SK-N-SH (cell line): ENCODE measurements at regions of chr5 and their contacts with region 1.

Region 1: DNA sequence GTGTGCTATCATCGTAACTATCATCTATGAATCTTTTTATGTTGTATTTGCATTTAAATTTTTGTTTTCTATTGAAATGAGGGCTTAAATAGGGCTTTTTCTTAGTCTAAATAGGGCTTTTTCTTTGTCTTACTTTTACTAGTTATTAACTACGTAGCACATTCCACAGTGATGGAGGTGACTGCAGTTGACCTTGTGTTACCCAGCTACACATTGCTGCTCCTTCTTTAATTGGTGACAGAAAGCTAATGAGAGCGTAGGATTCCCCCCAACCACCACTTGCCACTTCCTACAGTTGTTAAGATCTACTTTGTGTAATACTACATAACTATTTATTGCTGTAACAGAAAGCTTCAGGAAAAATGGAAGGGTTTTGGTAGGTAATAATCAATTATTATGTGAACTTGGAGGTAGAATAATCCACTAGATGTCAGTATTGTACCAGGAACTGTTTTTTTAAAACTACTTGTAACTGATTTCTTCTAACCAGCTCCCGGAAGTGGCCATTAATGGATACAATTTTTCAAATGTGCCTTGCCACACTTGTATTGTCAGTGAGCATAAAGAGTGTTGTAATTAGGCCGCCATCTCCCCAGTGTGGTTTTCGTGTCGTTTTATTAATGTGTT is 18.0 kb downstream of the MTRR start:
- DNase-seq: peak; percentile 27
- H3K4me3 ChIP-seq: no peak overlapping the region
- H3K27ac ChIP-seq: no peak overlapping the region
- H3K4me1 ChIP-seq: no peaks in the 10 kb centered on the region
- H3K27me3 ChIP-seq: no peaks in the 10 kb centered on the region
- CTCF ChIP-seq: peak; percentile 72
- EP300 ChIP-seq: no peak
- RAD21 ChIP-seq: peak; percentile 56

Region 2: GRCh38 chr5:7844901-7845300 is 42.1 kb before region 1 on chr5:
- CTCF ChIA-PET with region 1: no interaction called
- POLR2A ChIA-PET with region 1: no interaction called
- DNase-seq: no peak
- H3K4me3 ChIP-seq: no peak overlapping the region
- H3K27ac ChIP-seq: no peak overlapping the region
- H3K4me1 ChIP-seq: peaks cover 0 to 5% of the 10 kb centered on the region in 2 experiments; a peak in 1 of 4 replicates
- H3K27me3 ChIP-seq: peaks cover 34% of the 10 kb centered on the region
- CTCF ChIP-seq: no peak
- EP300 ChIP-seq: no peak
- RAD21 ChIP-seq: no peak

Region 3: DNA sequence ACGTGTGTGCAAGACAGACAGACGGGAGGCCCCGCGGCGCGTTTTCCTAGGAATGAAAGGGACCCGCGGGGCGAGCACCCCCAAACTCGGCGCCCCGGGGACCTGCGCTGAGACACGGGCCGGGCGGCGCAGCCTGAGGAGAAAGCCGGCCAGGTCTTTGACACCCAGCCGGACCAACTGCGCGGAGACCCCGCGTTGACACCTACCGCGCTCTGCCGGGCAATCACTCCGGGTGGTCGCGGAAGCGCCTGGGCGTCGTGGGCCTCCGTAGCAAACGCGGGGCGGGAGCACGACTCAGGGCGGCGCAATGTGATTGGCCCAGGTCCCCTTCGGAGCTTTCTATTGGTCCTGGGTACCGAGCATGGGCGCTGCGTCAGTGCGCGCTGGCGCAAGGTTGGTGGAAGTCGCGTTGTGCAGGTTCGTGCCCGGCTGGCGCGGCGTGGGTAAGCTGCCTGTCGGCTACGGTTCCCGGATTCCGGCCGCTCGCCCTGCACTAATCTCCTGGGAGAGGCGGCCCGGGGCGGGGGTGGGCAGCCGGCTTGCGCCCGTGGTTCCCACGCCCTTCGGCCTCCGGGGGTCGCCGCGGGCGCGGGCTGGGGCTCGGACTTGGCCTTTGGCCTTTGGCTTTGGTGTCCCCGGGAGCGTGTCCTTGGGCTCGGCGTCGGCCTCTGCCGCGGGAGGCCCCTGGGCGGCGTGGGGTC is 18.0 kb before region 1 on chr5 and contains the starts of genes FASTKD3 and MTRR:
- CTCF ChIA-PET with region 1: interaction called, 21 read pairs
- POLR2A ChIA-PET with region 1: no interaction called
- DNase-seq: peak; percentile 97
- H3K4me3 ChIP-seq: peak within 1 kb of the TSS; percentile 84 to 96
- H3K27ac ChIP-seq: peak within 1 kb of the TSS; percentile 47 to 55; a peak in 2 of 4 replicates
- H3K4me1 ChIP-seq: peaks cover 0 to 12% of the 10 kb centered on the region in 2 experiments; a peak in 2 of 4 replicates
- H3K27me3 ChIP-seq: no peaks in the 10 kb centered on the region
- CTCF ChIP-seq: no peak
- EP300 ChIP-seq: no peak
- RAD21 ChIP-seq: no peak
- polyA plus RNA-seq, gene FASTKD3: 5.4 and 8.5 TPM in 2 replicates
- polyA plus RNA-seq, gene MTRR: 18.4 and 23.5 TPM in 2 replicates

Region 4: GRCh38 chr5:7897014-7897632 is 10.2 kb after region 1 on chr5:
- CTCF ChIA-PET with region 1: interaction called, 13 read pairs
- POLR2A ChIA-PET with region 1: interaction called, 4 read pairs
- DNase-seq: peak; percentile 27
- H3K4me3 ChIP-seq: no peak overlapping the region
- H3K27ac ChIP-seq: no peak overlapping the region
- H3K4me1 ChIP-seq: no peaks in the 10 kb centered on the region
- H3K27me3 ChIP-seq: no peaks in the 10 kb centered on the region
- CTCF ChIP-seq: peak; percentile 61
- EP300 ChIP-seq: no peak
- RAD21 ChIP-seq: peak; percentile 25

Region 5: DNA sequence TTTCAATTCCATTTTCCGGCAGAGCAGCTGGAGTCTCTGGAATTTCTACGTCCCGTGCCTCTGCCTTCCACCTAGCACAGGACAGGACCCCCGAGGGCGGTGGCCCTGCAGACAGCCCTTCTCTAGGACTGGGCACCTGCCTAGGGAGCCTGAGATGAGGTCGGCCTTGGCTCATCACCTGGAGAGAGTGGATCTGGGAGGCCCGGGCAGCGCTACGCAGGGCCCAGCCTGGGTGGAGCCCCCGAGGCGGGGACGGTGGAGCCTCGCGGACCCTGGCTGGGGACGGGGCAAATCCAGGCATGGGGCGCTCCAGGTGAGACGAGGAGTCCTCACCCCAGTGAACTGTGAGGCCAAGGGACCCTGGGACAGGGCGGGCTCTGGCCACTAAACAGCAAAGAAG is 96.5 kb after region 1 on chr5:
- CTCF ChIA-PET with region 1: no interaction called
- POLR2A ChIA-PET with region 1: no interaction called
- DNase-seq: peak; percentile 2
- H3K4me3 ChIP-seq: no peak overlapping the region
- H3K27ac ChIP-seq: no peak overlapping the region
- H3K4me1 ChIP-seq: no peaks in the 10 kb centered on the region
- H3K27me3 ChIP-seq: peaks cover 4% of the 10 kb centered on the region; the same call in 1 of the 2 replicates
- CTCF ChIP-seq: no peak
- EP300 ChIP-seq: no peak
- RAD21 ChIP-seq: no peak